Activated naive CD8-positive, alpha-beta T cell treated with anti-CD3 and anti-CD28 coated beads, Interleukin-2, amount 10 ng/mL, durations not matched to agents 7 days and 5 days (primary cell): ENCODE measurements at regions of chr5 and their contacts with region 1.

Region 1: DNA sequence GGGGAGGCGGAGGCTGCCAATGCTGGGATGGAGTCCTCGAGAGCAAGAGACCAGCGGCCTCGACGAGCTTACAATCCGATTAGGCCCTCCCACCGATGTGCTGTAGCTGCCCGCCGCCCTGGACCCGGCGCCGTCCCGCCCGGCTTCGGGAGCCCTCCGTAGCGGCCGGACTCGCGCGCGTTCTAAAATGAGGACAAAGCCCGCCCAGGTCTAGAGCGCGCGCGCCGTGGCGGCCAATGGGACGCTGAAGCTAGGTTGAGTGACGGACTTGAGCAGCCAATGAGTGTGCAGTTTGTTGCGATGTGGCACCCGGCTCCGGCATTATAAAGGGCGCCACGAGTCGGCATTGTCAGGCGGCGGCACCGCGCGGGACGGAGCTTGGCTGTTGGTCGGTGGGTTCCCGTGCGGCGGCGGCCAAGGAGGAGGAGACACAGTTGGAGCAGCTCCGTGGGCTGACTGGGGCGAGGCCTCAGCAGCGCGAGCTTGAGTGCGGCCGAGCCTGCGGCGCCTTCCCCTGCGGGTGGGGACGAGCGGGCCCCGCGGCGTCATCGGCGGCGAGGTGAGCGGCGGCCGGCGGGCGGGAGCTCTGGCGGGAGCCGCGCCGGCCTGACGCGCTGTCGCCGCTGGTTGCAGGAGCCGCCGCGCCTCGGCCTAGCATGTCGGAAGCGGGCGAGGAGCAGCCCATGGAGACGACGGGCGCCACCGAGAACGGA is at the start of gene HNRNPAB:
- DNase-seq: peak; percentile 96
- ATAC-seq: peak; percentile 76
- H3K4me3 Mint-ChIP-seq: peak within 1 kb of the TSS; percentile 98
- H3K27ac Mint-ChIP-seq: peak within 1 kb of the TSS; percentile 99
- H3K4me1 Mint-ChIP-seq: peaks cover 32% of the 10 kb centered on the region
- H3K27me3 Mint-ChIP-seq: no peaks in the 10 kb centered on the region
- total RNA-seq, gene HNRNPAB: 183 to 198 TPM

Region 2: DNA sequence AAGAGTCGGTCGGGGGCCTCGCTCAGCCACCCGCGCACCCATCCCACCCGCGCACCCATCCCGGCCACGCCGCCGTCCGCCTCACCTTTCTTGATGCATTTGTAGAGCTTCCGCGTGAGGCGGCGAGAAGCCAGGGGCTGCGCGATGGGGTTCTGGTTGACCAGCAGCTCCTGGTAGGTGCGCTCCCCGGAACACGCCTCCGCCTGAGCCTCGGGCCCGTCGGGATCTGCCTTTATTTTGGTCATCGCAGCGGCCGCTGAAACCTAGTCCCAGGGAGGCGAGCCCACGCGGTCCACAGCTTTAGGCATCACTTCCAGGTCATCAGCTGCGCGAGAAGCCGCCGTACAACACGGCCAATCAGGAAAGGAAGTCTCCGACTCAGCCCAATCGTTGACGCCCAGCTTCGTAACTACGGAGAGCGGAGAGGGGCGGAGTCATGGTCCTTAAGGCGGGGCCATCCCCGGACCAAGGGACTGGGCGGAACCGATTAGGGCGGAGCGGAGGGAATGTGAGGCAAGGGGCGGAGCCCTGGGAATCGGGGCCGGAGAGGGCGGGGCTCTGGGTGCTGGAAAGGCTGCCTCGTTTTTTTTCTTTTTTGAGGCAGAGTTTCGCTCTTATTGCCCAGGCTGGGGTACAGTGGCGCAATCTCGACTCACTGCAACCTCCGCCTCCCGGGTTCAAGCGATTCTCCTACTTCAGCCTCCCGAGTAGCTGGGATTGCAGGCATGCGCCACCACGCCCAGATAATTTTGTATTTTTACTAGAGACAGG is 50.6 kb before region 1 on chr5 and contains the start of gene NHP2:
- POLR2A ChIA-PET with region 1: interaction called, 12 read pairs
- DNase-seq: peak; percentile 98
- ATAC-seq: peak; percentile 94
- H3K4me3 Mint-ChIP-seq: peak within 1 kb of the TSS; percentile 96
- H3K27ac Mint-ChIP-seq: peak within 1 kb of the TSS; percentile 91
- H3K4me1 Mint-ChIP-seq: peaks cover 37% of the 10 kb centered on the region
- H3K27me3 Mint-ChIP-seq: no peaks in the 10 kb centered on the region
- total RNA-seq, gene NHP2: 113 to 124 TPM

Region 3: GRCh38 chr5:178232124-178232919 is 28.0 kb after region 1 on chr5 and contains the start of gene PHYKPL:
- POLR2A ChIA-PET with region 1: interaction called, 19 read pairs
- DNase-seq: peak; percentile 82
- ATAC-seq: peak; percentile 66
- H3K4me3 Mint-ChIP-seq: peak within 1 kb of the TSS; percentile 91
- H3K27ac Mint-ChIP-seq: peak within 1 kb of the TSS; percentile 86
- H3K4me1 Mint-ChIP-seq: peaks cover 65% of the 10 kb centered on the region
- H3K27me3 Mint-ChIP-seq: no peaks in the 10 kb centered on the region
- total RNA-seq, gene PHYKPL: 158 to 165 TPM

Region 4: GRCh38 chr5:178241231-178241663 is 36.9 kb after region 1 on chr5:
- POLR2A ChIA-PET with region 1: interaction called, 16 read pairs
- DNase-seq: peak; percentile 77
- ATAC-seq: peak; percentile 55
- H3K4me3 Mint-ChIP-seq: peak overlapping the region; percentile 95
- H3K27ac Mint-ChIP-seq: peak overlapping the region; percentile 98
- H3K4me1 Mint-ChIP-seq: peaks cover 62% of the 10 kb centered on the region
- H3K27me3 Mint-ChIP-seq: no peaks in the 10 kb centered on the region